GM18951 (cell line): ENCODE measurements at regions of chr1 and their contacts with region 1.

Region 1: GRCh38 chr1:53860967-53861411 is 22.9 kb upstream of the NDC1 start:
- POLR2A ChIP-seq: no peak

Region 2: DNA sequence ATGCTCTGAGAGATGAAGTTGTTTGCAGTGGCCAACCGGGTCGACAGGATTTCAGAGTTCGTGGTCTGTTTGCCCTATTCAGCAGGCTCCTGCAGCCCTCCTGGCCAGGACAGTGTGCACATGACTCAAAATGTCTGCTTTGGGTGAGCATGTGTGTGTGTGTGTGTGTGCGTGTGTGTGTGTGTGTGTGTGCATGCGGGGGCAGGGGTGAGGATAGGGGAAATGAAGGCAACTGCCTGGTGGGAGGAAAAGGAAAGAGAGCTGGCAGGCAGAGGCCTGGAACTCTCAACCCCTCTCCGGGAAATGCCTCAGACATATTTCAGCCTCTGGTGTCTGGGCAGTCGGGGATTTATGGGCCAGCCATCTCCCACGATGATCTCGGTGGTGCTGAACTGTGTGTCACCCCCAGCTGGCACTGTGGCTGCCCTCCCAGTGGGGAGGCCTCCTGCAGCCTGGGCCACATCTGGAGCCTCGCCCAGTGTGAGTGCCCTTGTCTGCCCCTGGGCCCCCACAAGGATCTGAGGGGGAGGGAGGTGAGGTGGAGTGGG is 276.6 kb after region 1 on chr1:
- in situ Hi-C with region 1: no loop called
- POLR2A ChIP-seq: no peak

Region 3: DNA sequence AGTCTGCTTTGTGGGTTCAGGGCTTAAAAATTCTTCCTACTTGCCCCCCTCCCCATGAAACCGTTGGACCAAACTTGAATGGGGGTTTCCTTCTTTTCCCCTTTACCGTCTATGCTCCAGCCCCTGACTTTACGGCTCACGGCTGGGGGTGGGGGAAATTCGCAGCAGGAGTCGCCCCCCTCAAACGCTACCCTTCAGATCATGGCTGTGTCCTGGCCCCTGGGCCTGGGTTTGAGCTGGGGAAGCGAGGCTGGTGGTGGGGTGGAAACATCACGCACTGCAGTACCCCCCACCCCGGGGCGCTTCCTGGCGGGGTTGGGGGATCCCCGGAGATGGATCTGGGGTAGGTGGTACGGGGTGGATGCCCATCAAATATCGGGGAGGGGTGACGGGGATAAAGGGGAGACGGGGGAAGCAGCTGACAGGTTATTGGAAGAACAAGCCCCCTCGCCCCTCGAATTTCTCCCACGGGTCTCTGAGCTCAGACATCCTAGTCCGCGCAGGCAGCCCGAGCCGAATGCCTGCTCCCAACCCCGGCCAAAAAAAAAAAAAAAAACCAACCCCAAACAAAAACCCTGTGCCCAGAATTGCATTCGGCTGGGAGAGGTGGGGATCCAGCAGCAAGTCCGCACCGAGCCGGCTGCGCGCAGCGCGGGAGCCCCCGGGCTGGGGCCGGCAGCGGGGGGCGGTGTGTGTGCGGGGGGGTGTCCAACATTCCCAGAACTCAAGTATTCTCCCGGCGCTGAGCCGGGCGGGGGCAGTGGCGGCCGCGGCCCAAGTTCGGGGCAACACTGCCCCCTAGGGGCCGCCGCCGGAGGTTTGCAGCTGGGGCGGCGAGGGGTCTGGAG is 628.0 kb after region 1 on chr1:
- in situ Hi-C with region 1: loop called (anchors 25 kb)
- POLR2A ChIP-seq: no peak